ENCODE measurements at regions of chr17 and their contacts with region 1.

Region 1: DNA sequence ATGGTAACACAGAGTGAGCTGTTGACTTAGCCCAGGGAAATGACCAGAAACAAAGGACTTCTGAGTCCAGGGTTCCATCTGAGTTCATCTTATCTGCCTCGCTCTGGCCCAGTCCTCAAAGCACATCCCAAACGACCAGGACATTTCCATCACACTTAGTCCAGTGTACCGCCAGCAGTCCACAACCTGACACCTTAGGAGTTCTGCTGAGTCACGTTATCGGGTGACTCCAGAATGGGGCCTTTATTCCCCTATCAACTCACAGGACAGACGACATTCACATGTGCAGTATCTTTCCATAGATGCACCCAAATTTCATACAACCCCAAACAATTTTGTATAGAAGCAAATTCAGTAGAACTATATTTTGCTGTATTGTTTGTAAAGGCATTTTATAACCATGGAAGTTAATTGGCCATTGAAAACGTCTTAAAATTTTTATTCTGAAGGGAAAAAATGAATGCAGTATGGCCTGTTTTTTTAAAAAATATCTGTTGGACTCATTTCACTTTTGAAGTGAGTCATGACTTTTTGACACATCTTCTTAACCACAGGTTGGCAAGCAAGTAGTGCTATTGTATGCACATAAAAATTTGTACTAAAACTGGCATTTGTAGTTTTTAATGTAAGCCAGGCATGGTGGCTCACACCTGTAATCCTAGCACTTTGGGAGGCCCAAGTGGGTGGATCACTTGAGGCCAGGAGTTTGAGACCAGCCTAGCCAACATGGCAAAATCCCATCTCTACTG is 46.3 kb downstream of the ZNF18 start:
- DNase-seq: peak; percentile 62
- H3K4me3 ChIP-seq: no peak overlapping the region
- H3K27ac ChIP-seq: no peak overlapping the region
- H3K4me1 ChIP-seq: 0 out of 2 replicates have a peak, but pooled peaks cover 6% of the 10 kb centered on the region
- H3K27me3 ChIP-seq: no peaks in the 10 kb centered on the region

Region 2: DNA sequence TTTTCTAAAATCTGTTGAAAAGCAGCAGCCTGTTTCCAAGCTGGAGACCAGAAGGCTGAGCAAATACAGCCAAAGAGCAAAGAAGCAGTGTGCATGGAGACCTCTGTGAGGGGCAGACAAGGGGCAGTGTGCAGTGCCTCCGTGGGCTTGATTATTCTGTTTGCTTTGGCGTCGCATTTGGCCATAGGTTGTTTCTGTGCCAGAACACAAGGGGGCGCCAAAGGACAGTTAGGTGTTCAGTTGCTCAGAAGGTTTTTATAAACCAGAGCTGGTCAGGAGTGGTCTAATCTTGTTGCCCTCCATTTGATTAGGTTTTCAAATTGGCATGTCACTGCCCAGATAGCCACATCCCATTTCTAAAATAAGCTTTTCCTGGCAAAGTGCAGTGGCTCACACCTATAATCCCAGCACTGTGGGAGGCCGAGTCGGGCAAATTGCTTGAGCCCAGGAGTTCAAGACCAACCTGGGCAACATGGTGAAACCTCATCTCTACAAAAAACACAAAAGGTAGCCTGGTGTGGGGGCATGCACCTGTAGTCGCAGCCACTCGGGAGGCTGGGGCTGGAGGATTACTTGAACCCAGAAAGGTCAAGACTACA is 1304.5 kb before region 1 on chr17:
- in situ Hi-C with region 1: loop called (anchors 25 kb)
- DNase-seq: peak; percentile 78
- H3K4me3 ChIP-seq: no peak overlapping the region
- H3K27ac ChIP-seq: no peak overlapping the region
- H3K4me1 ChIP-seq: no peaks in the 10 kb centered on the region
- H3K27me3 ChIP-seq: no peaks in the 10 kb centered on the region

Measured in GM23248 (cell line).